ENCODE measurements at regions of chr14 and their contacts with region 1.

Region 1: GRCh38 chr14:31026395-31027118 is 378 bp upstream of the STRN3 start:
- DNase-seq: peak; percentile 95
- ATAC-seq: peak; percentile 94
- H3K4me3 Mint-ChIP-seq: peak overlapping the region; percentile 99
- H3K27ac Mint-ChIP-seq: peak overlapping the region; percentile 95
- H3K4me1 Mint-ChIP-seq: peaks cover 40% of the 10 kb centered on the region
- H3K27me3 Mint-ChIP-seq: no peaks in the 10 kb centered on the region
- CTCF ChIP-seq: no peak

Region 2: DNA sequence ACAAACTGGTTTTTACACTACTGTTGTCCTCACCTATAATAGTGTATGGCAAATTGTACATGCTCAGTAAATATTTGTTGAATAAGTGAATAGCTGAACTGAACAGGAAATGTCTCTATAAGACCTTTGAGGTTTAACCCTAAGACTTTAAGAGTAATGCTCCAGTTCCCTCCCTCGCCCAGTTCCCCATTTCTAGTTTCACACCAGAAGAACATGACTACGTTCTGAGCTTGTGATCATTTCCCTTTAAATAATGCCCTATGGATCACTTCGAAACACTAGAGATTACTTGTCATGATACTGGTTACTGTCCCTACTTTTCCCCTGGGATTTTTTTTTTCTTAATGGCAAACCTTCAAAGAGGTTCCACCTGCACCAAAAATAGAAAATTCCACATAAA is 1168.3 kb before region 1 on chr14:
- CTCF ChIA-PET with region 1: no interaction called
- POLR2A ChIA-PET with region 1: no interaction called
- intact Hi-C with region 1: loop called (anchors 10 kb)
- DNase-seq: no peak
- ATAC-seq: peak; percentile 80
- H3K4me3 Mint-ChIP-seq: peak overlapping the region; percentile 80
- H3K27ac Mint-ChIP-seq: peak overlapping the region; percentile 98
- H3K4me1 Mint-ChIP-seq: peaks cover 43% of the 10 kb centered on the region
- H3K27me3 Mint-ChIP-seq: no peaks in the 10 kb centered on the region
- CTCF ChIP-seq: no peak

Region 3: GRCh38 chr14:30621940-30622830 is 404.4 kb before region 1 on chr14 and contains the start of gene SCFD1:
- CTCF ChIA-PET with region 1: no interaction called
- POLR2A ChIA-PET with region 1: interaction called, 3 read pairs
- intact Hi-C with region 1: loop called (anchors 2 kb)
- DNase-seq: peak; percentile 92
- ATAC-seq: peak; percentile 97
- H3K4me3 Mint-ChIP-seq: peak within 1 kb of the TSS; percentile 93
- H3K27ac Mint-ChIP-seq: peak within 1 kb of the TSS; percentile 93
- H3K4me1 Mint-ChIP-seq: peaks cover 47% of the 10 kb centered on the region
- H3K27me3 Mint-ChIP-seq: no peaks in the 10 kb centered on the region
- CTCF ChIP-seq: no peak
- total RNA-seq, gene SCFD1: 70.1 and 83.6 TPM in 2 replicates

Region 4: GRCh38 chr14:30982533-30982932 is 44.0 kb before region 1 on chr14:
- CTCF ChIA-PET with region 1: interaction called, 3 read pairs
- POLR2A ChIA-PET with region 1: interaction called, 5 read pairs
- intact Hi-C with region 1: loop called (anchors 2 kb)
- DNase-seq: no peak
- ATAC-seq: peak; percentile 74
- H3K4me3 Mint-ChIP-seq: no peak overlapping the region
- H3K27ac Mint-ChIP-seq: peak overlapping the region; percentile 53
- H3K4me1 Mint-ChIP-seq: peaks cover 53% of the 10 kb centered on the region
- H3K27me3 Mint-ChIP-seq: no peaks in the 10 kb centered on the region
- CTCF ChIP-seq: no peak

Region 5: GRCh38 chr14:31084385-31084784 is 57.8 kb after region 1 on chr14:
- CTCF ChIA-PET with region 1: interaction called, 5 read pairs
- POLR2A ChIA-PET with region 1: interaction called, 8 read pairs
- intact Hi-C with region 1: loop called (anchors 2 kb)
- DNase-seq: peak; percentile 33
- ATAC-seq: peak; percentile 98
- H3K4me3 Mint-ChIP-seq: no peak overlapping the region
- H3K27ac Mint-ChIP-seq: no peak overlapping the region
- H3K4me1 Mint-ChIP-seq: peaks cover 9% of the 10 kb centered on the region
- H3K27me3 Mint-ChIP-seq: no peaks in the 10 kb centered on the region
- CTCF ChIP-seq: no peak

Region 6: DNA sequence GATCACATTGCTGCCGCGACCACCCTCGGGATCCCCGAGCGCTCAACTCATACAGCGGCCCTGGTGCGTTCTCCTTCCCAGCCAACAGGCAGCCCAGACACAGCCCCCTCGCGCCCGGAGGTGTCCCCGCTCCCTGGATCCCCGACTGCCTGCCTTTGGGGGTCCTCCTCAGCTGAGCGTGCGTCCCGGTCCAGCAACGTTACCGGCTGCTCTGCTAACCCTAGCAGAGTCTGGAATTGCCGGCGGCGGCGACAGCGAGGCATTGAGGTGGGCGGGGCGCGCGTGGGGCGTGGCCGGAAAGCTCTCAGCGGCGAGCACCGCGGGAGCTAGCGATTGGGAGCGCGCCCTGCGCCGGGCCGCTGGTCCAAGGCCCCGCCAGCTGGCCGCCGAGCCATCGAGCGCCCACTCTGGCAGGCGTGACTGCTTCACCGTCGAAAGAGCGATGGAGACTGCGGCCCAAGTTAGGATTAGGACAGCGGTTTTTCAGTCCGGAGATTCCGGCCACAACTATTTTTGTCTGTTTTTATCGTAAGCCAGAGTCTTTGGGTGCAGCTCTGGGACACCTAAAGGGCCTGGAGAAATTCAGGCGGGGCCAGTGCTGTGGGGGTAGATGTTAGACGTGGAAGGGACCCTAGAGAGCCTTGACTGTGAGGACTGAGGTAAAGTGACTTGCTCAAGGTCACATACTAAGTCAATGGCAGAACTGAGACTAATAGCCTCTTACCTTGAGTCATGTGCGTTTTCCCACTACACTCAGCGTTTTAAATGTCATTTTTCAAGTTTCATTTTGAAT is 394.0 kb after region 1 on chr14 and contains the start of gene HEATR5A:
- CTCF ChIA-PET with region 1: no interaction called
- POLR2A ChIA-PET with region 1: interaction called, 8 read pairs
- intact Hi-C with region 1: loop called (anchors 1 kb)
- DNase-seq: peak; percentile 95
- ATAC-seq: peak; percentile 97
- H3K4me3 Mint-ChIP-seq: peak within 1 kb of the TSS; percentile 96
- H3K27ac Mint-ChIP-seq: peak within 1 kb of the TSS; percentile 90
- H3K4me1 Mint-ChIP-seq: peaks cover 22% of the 10 kb centered on the region
- H3K27me3 Mint-ChIP-seq: no peaks in the 10 kb centered on the region
- CTCF ChIP-seq: no peak
- total RNA-seq, gene HEATR5A: 11.1 and 13.2 TPM in 2 replicates

Region 7: DNA sequence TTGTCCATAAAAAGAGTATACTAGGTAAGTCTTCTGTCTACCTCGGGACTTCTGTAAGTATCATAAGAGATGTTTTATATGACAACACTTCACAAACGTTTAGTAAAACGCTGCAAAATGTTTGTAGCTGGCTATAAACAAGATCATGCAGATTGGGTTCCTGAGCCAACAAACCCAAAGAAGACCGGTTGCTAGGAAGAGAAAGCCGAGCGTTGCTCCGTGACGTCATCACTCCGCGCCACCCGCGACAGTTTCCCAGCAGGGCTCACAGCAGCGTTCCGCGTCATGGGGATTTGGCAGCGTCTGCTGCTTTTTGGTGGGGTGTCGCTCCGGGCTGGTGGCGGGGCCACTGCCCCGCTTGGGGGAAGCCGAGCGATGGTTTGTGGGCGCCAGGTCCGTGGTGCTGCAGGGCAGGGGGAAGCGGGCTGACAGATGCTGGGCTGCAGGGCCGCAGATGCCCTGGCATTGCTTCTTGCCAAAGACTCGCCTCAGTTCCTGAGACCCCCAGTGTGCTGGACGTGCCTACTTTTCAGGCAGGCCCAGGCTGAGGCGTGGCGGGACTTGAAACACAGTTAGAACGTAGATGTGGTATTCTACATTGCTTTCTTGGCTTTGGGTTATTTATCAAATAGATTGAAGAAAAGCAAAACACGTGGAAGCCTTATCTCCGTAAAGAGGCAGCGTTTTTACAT is 534.7 kb after region 1 on chr14 and contains the start of gene NUBPL:
- CTCF ChIA-PET with region 1: no interaction called
- POLR2A ChIA-PET with region 1: no interaction called
- intact Hi-C with region 1: loop called (anchors 5 kb)
- DNase-seq: peak; percentile 97
- ATAC-seq: peak; percentile 92
- H3K4me3 Mint-ChIP-seq: peak within 1 kb of the TSS; percentile 97
- H3K27ac Mint-ChIP-seq: peak within 1 kb of the TSS; percentile 97
- H3K4me1 Mint-ChIP-seq: peaks cover 24% of the 10 kb centered on the region
- H3K27me3 Mint-ChIP-seq: peaks cover 6% of the 10 kb centered on the region
- CTCF ChIP-seq: no peak
- total RNA-seq, gene NUBPL: 11.7 and 11.9 TPM in 2 replicates